CD8-positive, alpha-beta T cell (primary cell): ENCODE measurements at regions of chr17 and their contacts with region 1.

Region 1: GRCh38 chr17:62724398-62725146 is 83.5 kb downstream of the MARCHF10 start:
- DNase-seq: peak; percentile 25 to 92 (median 65)
- ATAC-seq: peak; percentile 97
- H3K4me3 ChIP-seq: peak overlapping the region; percentile 11 to 23
- H3K4me3 Mint-ChIP-seq: peak overlapping the region; percentile 72
- H3K27ac ChIP-seq: peak overlapping the region; percentile 30 to 83
- H3K27ac Mint-ChIP-seq: peak overlapping the region; percentile 94
- H3K4me1 ChIP-seq: peaks cover 21% of the 10 kb centered on the region
- H3K4me1 Mint-ChIP-seq: peaks cover 24% of the 10 kb centered on the region
- H3K27me3 ChIP-seq: no peaks in the 10 kb centered on the region
- H3K27me3 Mint-ChIP-seq: no peaks in the 10 kb centered on the region
- CTCF ChIP-seq: no peak

Region 2: GRCh38 chr17:62592341-62593099 is 132.1 kb before region 1 on chr17:
- CTCF ChIA-PET with region 1: no interaction called
- POLR2A ChIA-PET with region 1: no interaction called
- intact Hi-C with region 1: no loop called
- DNase-seq: peak in 1 of 9 experiments; percentile 12
- ATAC-seq: no peak
- H3K4me3 ChIP-seq: no peak overlapping the region
- H3K4me3 Mint-ChIP-seq: no peak overlapping the region
- H3K27ac ChIP-seq: no peak overlapping the region
- H3K27ac Mint-ChIP-seq: no peak overlapping the region
- H3K4me1 ChIP-seq: no peaks in the 10 kb centered on the region
- H3K4me1 Mint-ChIP-seq: no peaks in the 10 kb centered on the region
- H3K27me3 ChIP-seq: no peaks in the 10 kb centered on the region
- H3K27me3 Mint-ChIP-seq: no peaks in the 10 kb centered on the region
- CTCF ChIP-seq: no peak

Region 3: DNA sequence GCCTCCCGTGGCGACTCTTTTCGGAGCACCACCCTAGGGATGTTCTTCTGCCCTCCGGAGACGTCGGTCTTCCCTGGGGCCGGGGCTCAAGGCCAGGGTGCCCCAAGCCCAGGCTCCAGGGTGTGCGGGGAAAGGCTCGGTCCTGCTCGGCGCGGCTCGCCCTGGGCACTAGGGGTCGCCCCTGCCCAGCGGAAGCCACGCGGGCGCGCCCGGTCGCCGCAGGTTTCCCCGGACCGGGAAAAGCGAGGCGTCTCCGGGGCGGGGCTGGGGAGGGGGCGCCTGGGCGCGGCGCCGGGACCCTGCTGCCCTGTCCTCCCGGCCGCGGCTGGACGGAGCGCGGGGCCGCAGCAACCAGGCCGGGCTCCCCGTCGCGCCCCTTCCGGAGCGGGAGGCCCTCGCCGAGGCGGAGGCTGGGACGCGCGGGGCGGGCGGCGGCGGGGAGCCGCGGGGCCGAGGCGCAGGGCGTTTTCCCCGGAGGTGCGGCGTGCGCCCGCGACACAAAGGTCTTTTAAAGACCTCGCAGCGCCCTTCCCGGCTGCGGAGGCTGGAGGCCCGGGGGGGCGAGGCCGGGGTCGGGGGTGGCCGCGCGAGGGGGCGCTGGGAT is 20.7 kb before region 1 on chr17:
- CTCF ChIA-PET with region 1: interaction called, 6 read pairs
- POLR2A ChIA-PET with region 1: no interaction called
- intact Hi-C with region 1: loop called in 1 of 2 experiments (anchors 1 kb)
- DNase-seq: peak; percentile 34 to 88 (median 71)
- ATAC-seq: peak; percentile 91
- H3K4me3 ChIP-seq: peak overlapping the region; percentile 49
- H3K4me3 Mint-ChIP-seq: peak overlapping the region; percentile 63
- H3K27ac ChIP-seq: no peak overlapping the region
- H3K27ac Mint-ChIP-seq: no peak overlapping the region
- H3K4me1 ChIP-seq: peaks cover 5% of the 10 kb centered on the region
- H3K4me1 Mint-ChIP-seq: peaks cover 7% of the 10 kb centered on the region
- H3K27me3 ChIP-seq: peaks cover 0 to 2% of the 10 kb centered on the region in 2 experiments
- H3K27me3 Mint-ChIP-seq: peaks cover 3% of the 10 kb centered on the region
- CTCF ChIP-seq: peak; percentile 76